T-cell (primary cell): ENCODE measurements at regions of chr17 and their contacts with region 1.

Region 1: DNA sequence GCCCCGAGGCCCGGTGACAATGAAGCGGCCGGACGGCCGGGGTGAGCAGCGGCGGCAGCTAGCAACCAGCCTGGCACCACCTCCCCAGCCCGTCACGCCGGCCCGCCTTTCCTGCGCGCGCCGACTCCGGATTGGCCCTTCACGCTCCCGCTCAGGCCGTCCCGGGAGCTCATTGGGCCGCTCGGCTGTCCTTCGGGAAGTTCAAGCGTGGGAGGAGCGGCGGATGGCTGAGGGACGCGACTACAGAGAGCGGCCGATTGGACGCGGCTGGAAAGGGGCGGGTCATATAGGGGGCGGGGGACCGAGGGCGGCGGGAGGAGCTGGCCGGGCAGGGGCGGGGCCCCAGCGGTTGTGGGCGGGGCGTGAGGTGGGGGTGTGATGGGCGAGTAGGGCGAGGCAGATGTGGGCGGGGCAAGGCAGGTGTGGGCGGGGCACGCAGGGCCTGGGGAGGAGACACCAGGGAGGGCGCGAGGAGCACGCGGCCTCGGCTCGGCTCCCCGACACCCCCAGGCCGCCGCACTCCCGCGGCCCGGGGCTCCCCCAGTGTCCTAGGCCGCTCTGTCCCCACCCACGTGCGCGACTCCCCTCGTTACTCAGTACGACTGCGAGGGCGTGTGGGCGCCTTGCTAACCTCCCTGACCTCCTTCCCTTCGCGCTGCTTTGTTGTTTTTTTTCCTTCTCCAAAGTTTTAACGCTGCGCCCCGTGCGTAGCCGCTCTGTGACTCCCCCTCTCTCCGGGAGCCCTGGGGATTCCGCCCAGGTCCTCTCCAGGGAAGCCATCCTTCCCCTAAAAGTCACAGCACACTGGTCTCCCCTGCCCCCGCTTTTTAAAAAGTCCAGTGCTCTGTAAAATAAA is at the start of gene CEP131:
- DNase-seq: peak; percentile 97 to 100 (median 99)
- ATAC-seq: peak; percentile 96 to 98 (median 97)
- H3K4me3 ChIP-seq: peak within 1 kb of the TSS; percentile 47 to 56
- H3K4me3 Mint-ChIP-seq: peak within 1 kb of the TSS; percentile 75 to 82 (median 78)
- H3K27ac ChIP-seq: no peak within 1 kb of the TSS
- H3K27ac Mint-ChIP-seq: peak within 1 kb of the TSS; percentile 43 to 55
- H3K4me1 ChIP-seq: peaks cover 8 to 22% of the 10 kb centered on the region in 2 experiments
- H3K4me1 Mint-ChIP-seq: peaks cover 15 to 21% (median 16%) of the 10 kb centered on the region in 3 donors
- H3K27me3 ChIP-seq: peaks cover 0 to 9% of the 10 kb centered on the region in 2 experiments
- H3K27me3 Mint-ChIP-seq: no peaks in the 10 kb centered on the region
- total RNA-seq, gene CEP131: 9.0 to 15.8 (median 11.2) TPM

Region 2: DNA sequence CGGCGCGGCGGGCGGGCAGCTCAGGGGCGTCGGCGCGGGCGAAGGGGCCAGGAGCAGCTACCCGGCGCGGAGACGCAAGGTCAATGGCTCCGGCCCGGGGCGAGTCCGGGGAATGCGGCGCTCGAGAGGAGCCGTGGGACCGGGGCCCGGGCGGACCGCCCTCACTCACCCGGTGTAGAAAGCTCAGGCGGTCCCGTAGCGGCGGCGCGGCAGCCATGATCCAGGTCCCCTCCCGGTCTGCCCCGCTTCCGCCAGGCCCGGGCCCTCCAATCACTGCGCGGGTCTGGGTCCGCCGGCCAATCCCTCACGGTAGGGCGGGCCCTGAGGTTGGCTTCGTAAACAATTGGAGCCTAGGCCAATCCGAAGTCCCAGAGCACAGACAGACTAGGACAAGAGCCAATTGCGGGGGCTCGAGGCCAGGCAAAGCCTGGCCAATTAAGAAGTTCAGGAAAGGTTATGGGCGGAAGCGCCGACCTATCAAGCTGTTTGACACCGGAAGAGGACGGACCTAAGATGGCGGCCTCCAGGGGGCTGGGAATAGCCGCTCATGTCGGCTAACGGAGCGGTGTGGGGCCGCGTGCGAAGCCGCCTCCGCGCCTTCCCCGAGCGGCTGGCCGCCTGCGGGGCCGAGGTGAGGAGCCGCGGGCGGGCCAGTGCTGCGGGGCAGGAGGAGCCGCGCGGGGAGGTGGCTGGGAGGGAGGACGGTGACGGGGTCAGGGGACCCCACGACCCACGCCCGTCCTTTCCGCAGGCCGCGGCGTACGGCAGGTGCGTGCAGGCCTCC is 15.9 kb after region 1 on chr17 and contains the starts of genes NDUFAF8 and TEPSIN:
- CTCF ChIA-PET with region 1: interaction called in 1 of 2 experiments, 15 read pairs
- POLR2A ChIA-PET with region 1: interaction called, 5 to 9 read pairs
- DNase-seq: peak; percentile 82 to 99 (median 96)
- ATAC-seq: peak; percentile 94 to 98 (median 97)
- H3K4me3 ChIP-seq: peak within 1 kb of the TSS; percentile 78 to 79
- H3K4me3 Mint-ChIP-seq: peak within 1 kb of the TSS; percentile 91 to 94 (median 92)
- H3K27ac ChIP-seq: no peak within 1 kb of the TSS
- H3K27ac Mint-ChIP-seq: peak within 1 kb of the TSS; percentile 82 to 92
- H3K4me1 ChIP-seq: peaks cover 11 to 58% of the 10 kb centered on the region in 2 experiments
- H3K4me1 Mint-ChIP-seq: peaks cover 42 to 56% (median 47%) of the 10 kb centered on the region in 3 donors
- H3K27me3 ChIP-seq: no peaks in the 10 kb centered on the region
- H3K27me3 Mint-ChIP-seq: no peaks in the 10 kb centered on the region
- total RNA-seq, gene NDUFAF8: 35.0 to 60.8 (median 51.2) TPM
- total RNA-seq, gene TEPSIN: 73.8 to 169 (median 161) TPM

Region 3: GRCh38 chr17:81263371-81264181 is 40.4 kb after region 1 on chr17:
- CTCF ChIA-PET with region 1: no interaction called
- POLR2A ChIA-PET with region 1: no interaction called
- DNase-seq: no peak
- ATAC-seq: no peak
- H3K4me3 ChIP-seq: no peak overlapping the region
- H3K4me3 Mint-ChIP-seq: no peak overlapping the region
- H3K27ac ChIP-seq: no peak overlapping the region
- H3K27ac Mint-ChIP-seq: no peak overlapping the region
- H3K4me1 ChIP-seq: no peaks in the 10 kb centered on the region
- H3K4me1 Mint-ChIP-seq: peaks cover 0 to 5% (median 5%) of the 10 kb centered on the region in 3 donors
- H3K27me3 ChIP-seq: no peaks in the 10 kb centered on the region
- H3K27me3 Mint-ChIP-seq: no peaks in the 10 kb centered on the region